MCF 10A (cell line): ENCODE measurements at regions of chr1 and their contacts with region 1.

Region 1: DNA sequence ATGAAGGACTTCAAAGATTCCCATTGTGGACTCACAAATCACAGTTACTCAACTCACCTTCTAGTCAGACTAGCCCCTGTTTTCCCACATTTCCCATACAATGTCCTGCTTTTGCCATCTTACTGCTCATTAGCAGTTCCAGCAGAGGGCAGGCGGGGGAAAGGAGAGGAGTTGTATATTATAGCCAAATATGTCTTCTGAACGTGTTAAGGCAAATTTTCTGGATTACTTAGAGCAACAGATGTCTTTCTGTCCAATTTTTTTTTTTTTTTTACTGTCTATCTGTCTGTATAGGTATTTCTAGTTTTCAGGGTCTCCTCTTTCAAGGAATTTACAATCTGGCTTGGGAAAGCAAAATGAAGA is 29.9 kb upstream of the DDAH1 start:
- DNase-seq: peak; percentile 79
- H3K4me3 Mint-ChIP-seq: no peak overlapping the region
- H3K27ac Mint-ChIP-seq: peak overlapping the region; percentile 96
- H3K4me1 Mint-ChIP-seq: peaks cover 23% of the 10 kb centered on the region
- H3K27me3 Mint-ChIP-seq: no peaks in the 10 kb centered on the region
- CTCF ChIP-seq: peak; percentile 61

Region 2: GRCh38 chr1:85276215-85276977 is 218.5 kb before region 1 on chr1 and contains the start of gene BCL10:
- CTCF ChIA-PET with region 1: no interaction called
- POLR2A ChIA-PET with region 1: interaction called, 11 read pairs
- intact Hi-C with region 1: no loop called
- DNase-seq: peak; percentile 98
- H3K4me3 Mint-ChIP-seq: peak within 1 kb of the TSS; percentile 77
- H3K27ac Mint-ChIP-seq: peak within 1 kb of the TSS; percentile 85
- H3K4me1 Mint-ChIP-seq: peaks cover 40% of the 10 kb centered on the region
- H3K27me3 Mint-ChIP-seq: no peaks in the 10 kb centered on the region
- CTCF ChIP-seq: no peak
- total RNA-seq, gene BCL10: 43.9 and 55.8 TPM in 2 replicates

Region 3: GRCh38 chr1:85321237-85321964 is 173.5 kb before region 1 on chr1:
- CTCF ChIA-PET with region 1: no interaction called
- POLR2A ChIA-PET with region 1: no interaction called
- intact Hi-C with region 1: no loop called
- DNase-seq: no peak
- H3K4me3 Mint-ChIP-seq: no peak overlapping the region
- H3K27ac Mint-ChIP-seq: peak overlapping the region; percentile 26
- H3K4me1 Mint-ChIP-seq: peaks cover 17% of the 10 kb centered on the region
- H3K27me3 Mint-ChIP-seq: no peaks in the 10 kb centered on the region
- CTCF ChIP-seq: no peak

Region 4: DNA sequence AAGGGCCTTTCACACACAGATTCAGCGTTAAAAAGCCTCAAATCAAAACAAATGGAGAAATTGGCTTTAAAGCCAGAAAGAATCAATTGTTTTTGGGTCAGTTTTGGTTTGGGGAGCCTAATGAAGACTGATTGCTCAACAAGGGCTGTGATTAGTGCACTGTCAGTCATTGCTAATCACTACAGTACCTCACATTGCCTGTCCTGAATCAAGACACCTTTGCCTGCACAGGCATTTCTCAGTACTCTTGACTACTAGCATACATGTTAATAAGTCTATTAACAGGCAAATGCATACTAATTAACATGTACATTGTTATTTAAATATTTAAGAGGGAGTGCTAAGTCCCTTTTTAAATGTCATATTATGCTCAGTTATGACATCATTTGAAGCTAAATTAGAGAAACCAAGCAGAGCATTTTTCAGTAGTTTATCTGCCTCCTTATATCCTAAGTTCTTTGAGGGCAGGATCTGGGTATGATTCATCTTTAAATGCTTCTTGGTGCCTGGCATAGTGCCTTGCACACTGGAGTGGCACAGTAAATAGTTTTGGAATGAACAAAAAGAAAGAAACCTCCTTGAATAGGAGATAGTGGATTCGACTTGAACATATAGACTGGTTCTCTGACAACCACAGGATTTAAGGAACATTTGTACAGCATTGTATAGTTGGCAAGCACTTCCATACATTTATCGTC is 59.9 kb after region 1 on chr1:
- CTCF ChIA-PET with region 1: no interaction called
- POLR2A ChIA-PET with region 1: interaction called, 15 read pairs
- intact Hi-C with region 1: no loop called
- DNase-seq: peak; percentile 65
- H3K4me3 Mint-ChIP-seq: no peak overlapping the region
- H3K27ac Mint-ChIP-seq: peak overlapping the region; percentile 52
- H3K4me1 Mint-ChIP-seq: peaks cover 25% of the 10 kb centered on the region
- H3K27me3 Mint-ChIP-seq: no peaks in the 10 kb centered on the region
- CTCF ChIP-seq: no peak

Region 5: DNA sequence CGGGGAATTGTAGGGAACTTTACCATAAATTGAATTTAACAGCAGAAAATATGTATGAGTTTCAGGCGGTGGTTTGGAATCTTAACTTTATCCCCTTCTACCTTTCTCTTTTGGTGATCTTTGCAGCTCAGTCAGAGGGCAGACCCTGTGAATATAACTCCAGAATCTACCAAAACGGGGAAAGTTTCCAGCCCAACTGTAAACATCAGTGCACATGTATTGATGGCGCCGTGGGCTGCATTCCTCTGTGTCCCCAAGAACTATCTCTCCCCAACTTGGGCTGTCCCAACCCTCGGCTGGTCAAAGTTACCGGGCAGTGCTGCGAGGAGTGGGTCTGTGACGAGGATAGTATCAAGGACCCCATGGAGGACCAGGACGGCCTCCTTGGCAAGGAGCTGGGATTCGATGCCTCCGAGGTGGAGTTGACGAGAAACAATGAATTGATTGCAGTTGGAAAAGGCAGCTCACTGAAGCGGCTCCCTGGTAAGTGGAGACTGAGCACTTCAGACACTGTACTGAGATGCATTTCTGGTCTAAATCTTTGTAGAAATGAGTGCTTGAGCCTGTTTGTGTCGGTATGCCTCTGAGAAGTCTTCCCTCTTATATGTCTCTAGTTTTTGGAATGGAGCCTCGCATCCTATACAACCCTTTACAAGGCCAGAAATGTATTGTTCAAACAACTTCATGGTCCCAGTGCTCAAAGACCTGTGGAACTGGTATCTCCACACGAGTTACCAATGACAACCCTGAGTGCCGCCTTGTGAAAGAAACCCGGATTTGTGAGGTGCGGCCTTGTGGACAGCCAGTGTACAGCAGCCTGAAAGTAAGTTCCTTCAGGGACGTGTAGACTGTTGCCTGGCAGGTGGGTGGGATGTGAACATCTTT is 87.2 kb after region 1 on chr1:
- CTCF ChIA-PET with region 1: interaction called, 16 read pairs
- POLR2A ChIA-PET with region 1: interaction called, 32 read pairs
- intact Hi-C with region 1: loop called (anchors 1 kb)
- DNase-seq: peak; percentile 75
- H3K4me3 Mint-ChIP-seq: peak overlapping the region; percentile 94
- H3K27ac Mint-ChIP-seq: peak overlapping the region; percentile 97
- H3K4me1 Mint-ChIP-seq: peaks cover 37% of the 10 kb centered on the region
- H3K27me3 Mint-ChIP-seq: no peaks in the 10 kb centered on the region
- CTCF ChIP-seq: peak; percentile 27

Region 6: GRCh38 chr1:85850238-85850637 is 355.4 kb after region 1 on chr1:
- CTCF ChIA-PET with region 1: no interaction called
- POLR2A ChIA-PET with region 1: no interaction called
- intact Hi-C with region 1: loop called (anchors 1 kb)
- DNase-seq: peak; percentile 85
- H3K4me3 Mint-ChIP-seq: peak overlapping the region; percentile 41
- H3K27ac Mint-ChIP-seq: peak overlapping the region; percentile 93
- H3K4me1 Mint-ChIP-seq: peaks cover 11% of the 10 kb centered on the region
- H3K27me3 Mint-ChIP-seq: no peaks in the 10 kb centered on the region
- CTCF ChIP-seq: no peak